Brain microvascular endothelial cell (primary cell): ENCODE measurements at regions of chr1 and their contacts with region 1.

Region 1: DNA sequence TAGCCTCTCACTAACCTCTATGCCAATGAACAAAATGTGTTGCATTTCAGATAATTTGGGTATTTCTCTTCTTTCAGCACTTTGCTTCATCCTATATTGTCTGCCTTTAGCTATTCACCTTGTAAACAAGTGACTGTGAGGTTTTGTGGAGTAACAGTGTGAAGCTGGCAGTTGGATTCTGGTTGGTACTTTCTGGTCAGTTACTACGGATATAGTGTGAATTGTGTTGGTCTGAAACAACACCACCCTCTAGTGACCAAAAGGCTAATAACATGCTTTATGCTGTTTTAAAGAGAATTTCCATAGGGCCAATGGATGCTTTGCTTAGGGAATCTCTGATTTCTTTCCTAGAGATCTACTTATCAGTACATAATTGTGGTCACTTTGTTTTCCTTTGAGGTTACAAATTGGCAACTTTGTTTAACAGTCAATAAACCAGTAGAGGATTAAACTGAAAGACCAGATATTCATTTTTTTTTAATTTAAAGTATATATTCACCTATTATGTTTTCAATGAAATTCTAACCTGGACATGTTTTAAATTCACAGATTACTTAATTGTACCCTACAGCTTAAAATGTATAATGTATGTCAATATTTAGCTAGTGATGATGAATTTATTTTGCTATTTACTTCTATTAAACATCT is 2.5 kb upstream of the PTGER3 start:
- DNase-seq: peak; percentile 60
- H3K4me3 ChIP-seq: no peak overlapping the region
- H3K27ac ChIP-seq: no peak overlapping the region
- H3K27me3 ChIP-seq: peaks cover 39% of the 10 kb centered on the region
- CTCF ChIP-seq: peak; percentile 62

Region 2: DNA sequence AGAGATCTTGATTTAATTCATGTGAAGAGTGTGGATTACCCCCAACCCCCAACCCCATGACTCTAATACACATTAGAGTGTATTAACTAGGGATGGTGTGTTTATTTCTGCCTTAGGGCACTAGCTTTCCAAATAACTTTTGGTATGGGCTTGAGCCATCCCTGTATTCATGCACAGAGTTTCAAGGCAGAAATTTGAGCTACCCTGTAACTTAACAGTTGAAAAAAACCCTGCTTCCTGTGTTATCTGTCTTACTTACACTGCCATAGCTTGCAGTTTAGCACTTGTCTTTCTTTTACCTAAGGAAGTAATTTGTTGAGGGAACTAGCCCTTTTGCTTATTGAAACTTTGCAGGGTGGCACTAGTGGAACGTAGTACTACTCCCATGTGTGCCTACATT is 822.6 kb before region 1 on chr1:
- in situ Hi-C with region 1: loop called (anchors 25 kb)
- DNase-seq: no peak
- H3K4me3 ChIP-seq: no peak overlapping the region
- H3K27ac ChIP-seq: no peak overlapping the region
- H3K27me3 ChIP-seq: no peaks in the 10 kb centered on the region
- CTCF ChIP-seq: no peak

Region 3: GRCh38 chr1:71154429-71154828 is 104.4 kb after region 1 on chr1:
- in situ Hi-C with region 1: no loop called
- DNase-seq: no peak
- H3K4me3 ChIP-seq: no peak overlapping the region
- H3K27ac ChIP-seq: no peak overlapping the region
- H3K27me3 ChIP-seq: no peaks in the 10 kb centered on the region
- CTCF ChIP-seq: no peak